ENCODE measurements at regions of chr9 and their contacts with region 1.

Region 1: DNA sequence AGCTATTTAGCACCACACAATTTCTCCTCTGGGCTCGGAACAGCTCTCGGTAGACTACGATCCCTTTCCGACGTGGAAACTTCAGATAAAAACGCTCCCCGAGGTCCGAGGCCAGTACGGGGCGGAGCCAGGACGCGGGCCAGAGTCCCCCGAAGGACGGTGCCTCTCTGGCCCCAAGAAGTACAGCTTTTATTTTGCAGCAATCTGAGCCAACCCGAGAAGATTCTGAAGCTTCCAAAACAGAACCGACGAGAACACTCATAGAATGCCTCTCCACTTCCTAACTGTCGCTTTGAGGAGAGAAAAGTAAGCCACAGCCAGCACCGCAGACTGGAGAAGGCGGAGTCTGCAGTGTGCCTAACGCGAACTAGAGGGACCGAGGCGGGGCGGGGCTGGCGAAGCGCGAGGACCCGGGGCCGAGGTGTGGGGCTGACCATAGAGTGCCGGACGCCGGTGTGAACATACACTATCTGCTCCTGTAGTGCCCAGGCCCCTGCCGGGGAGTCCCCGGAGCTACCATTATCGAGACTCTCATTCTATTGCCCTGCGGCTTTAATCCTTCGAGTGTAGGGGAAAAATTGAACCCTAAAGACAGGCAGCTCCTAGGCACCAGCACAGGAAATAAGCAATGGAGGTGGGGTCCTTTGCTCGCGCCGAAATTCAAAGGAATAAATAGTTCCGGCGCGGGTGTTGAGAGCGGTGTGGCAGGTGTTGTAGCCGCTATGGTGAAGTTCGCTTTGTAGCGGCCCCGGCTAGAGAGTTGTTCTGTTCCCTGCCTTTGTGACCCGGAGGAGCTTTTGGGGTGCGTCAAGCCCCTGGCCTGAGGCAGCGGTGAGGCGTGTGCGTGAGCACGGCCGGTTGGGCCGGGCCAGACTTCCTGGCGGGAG is at the start of gene SMC2:
- DNase-seq: peak; percentile 86
- H3K4me3 ChIP-seq: peak within 1 kb of the TSS; percentile 71 to 77 (median 76)
- H3K27ac ChIP-seq: peak within 1 kb of the TSS; percentile 98
- H3K4me1 ChIP-seq: peaks cover 14% of the 10 kb centered on the region
- H3K27me3 ChIP-seq: no peaks in the 10 kb centered on the region
- CTCF ChIP-seq: no peak
- total RNA-seq, gene SMC2: 9.8 to 25.1 TPM

Region 2: GRCh38 chr9:103804077-103804735 is 289.7 kb before region 1 on chr9:
- CTCF ChIA-PET with region 1: no interaction called
- dilution Hi-C with region 1: no loop called
- in situ Hi-C with region 1: no loop called
- intact Hi-C with region 1: loop called (anchors 2 kb)
- DNase-seq: peak; percentile 76
- H3K4me3 ChIP-seq: no peak overlapping the region
- H3K27ac ChIP-seq: no peak overlapping the region
- H3K4me1 ChIP-seq: peaks cover 15% of the 10 kb centered on the region
- H3K27me3 ChIP-seq: no peaks in the 10 kb centered on the region
- CTCF ChIP-seq: no peak

Region 3: GRCh38 chr9:103949096-103949495 is 144.8 kb before region 1 on chr9:
- CTCF ChIA-PET with region 1: no interaction called
- dilution Hi-C with region 1: no loop called
- in situ Hi-C with region 1: no loop called
- intact Hi-C with region 1: loop called (anchors 10 kb)
- DNase-seq: no peak
- H3K4me3 ChIP-seq: no peak overlapping the region
- H3K27ac ChIP-seq: no peak overlapping the region
- H3K4me1 ChIP-seq: no peaks in the 10 kb centered on the region
- H3K27me3 ChIP-seq: no peaks in the 10 kb centered on the region
- CTCF ChIP-seq: no peak

Region 4: DNA sequence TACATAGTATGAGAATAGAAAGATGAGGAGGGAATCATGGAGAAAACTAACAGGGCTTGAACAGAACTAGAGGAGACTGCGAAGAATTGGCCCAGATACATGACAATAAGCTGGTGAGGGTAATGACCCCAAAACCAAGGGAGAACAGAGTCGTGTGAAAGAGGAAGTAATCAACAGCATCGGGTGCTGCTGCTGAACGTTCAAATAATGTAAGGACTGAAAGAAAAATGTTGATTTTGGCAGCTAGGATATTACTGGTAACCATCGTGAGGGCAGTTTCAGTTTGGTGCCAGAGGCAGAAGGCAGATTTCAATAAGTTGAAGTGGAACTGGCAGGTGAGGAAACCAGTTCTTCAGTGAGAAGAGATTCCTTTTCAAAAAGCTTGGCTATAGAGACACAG is 66.6 kb before region 1 on chr9:
- CTCF ChIA-PET with region 1: no interaction called
- dilution Hi-C with region 1: no loop called
- in situ Hi-C with region 1: no loop called
- intact Hi-C with region 1: loop called (anchors 2 kb)
- DNase-seq: no peak
- H3K4me3 ChIP-seq: no peak overlapping the region
- H3K27ac ChIP-seq: no peak overlapping the region
- H3K4me1 ChIP-seq: no peaks in the 10 kb centered on the region
- H3K27me3 ChIP-seq: no peaks in the 10 kb centered on the region
- CTCF ChIP-seq: no peak

Region 5: GRCh38 chr9:104075801-104076753 is 17.8 kb before region 1 on chr9:
- CTCF ChIA-PET with region 1: interaction called, 3 read pairs
- dilution Hi-C with region 1: no loop called
- in situ Hi-C with region 1: no loop called
- intact Hi-C with region 1: loop called (anchors 1 kb)
- DNase-seq: peak; percentile 91
- H3K4me3 ChIP-seq: peak overlapping the region in 2 of 3 experiments; percentile 11 to 12
- H3K27ac ChIP-seq: peak overlapping the region; percentile 98
- H3K4me1 ChIP-seq: peaks cover 36% of the 10 kb centered on the region
- H3K27me3 ChIP-seq: no peaks in the 10 kb centered on the region
- CTCF ChIP-seq: peak in 1 of 2 donors; percentile 22

Region 6: DNA sequence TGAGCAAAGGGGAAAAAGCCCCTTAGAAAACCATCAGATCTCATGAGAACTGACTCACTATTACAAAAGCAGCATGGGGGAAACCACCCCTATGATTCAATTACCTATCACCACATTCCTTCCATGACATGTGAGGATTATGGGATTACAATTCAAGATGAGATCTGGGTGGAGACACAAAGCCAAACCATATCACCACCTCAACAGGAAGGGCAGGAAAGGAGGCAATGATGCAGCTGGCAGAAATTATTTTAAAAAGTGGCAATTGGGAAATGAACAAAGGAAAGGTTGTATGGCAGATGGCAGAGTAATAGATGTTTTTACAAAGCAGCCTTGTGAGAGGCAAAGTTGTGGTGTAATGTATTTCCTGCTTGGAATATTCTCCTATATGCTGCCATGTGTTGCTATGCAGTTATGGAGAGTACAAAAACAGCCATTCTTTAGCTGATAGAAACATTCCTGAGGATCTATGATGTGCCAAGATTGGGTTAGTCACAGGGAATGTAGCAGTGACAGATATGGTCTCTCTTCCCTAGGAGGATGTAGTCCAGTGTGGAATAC is 139.0 kb after region 1 on chr9:
- CTCF ChIA-PET with region 1: no interaction called
- dilution Hi-C with region 1: no loop called
- in situ Hi-C with region 1: no loop called
- intact Hi-C with region 1: loop called (anchors 10 kb)
- DNase-seq: peak; percentile 98
- H3K4me3 ChIP-seq: no peak overlapping the region
- H3K27ac ChIP-seq: peak overlapping the region; percentile 97
- H3K4me1 ChIP-seq: peaks cover 25% of the 10 kb centered on the region
- H3K27me3 ChIP-seq: no peaks in the 10 kb centered on the region
- CTCF ChIP-seq: no peak

Region 7: DNA sequence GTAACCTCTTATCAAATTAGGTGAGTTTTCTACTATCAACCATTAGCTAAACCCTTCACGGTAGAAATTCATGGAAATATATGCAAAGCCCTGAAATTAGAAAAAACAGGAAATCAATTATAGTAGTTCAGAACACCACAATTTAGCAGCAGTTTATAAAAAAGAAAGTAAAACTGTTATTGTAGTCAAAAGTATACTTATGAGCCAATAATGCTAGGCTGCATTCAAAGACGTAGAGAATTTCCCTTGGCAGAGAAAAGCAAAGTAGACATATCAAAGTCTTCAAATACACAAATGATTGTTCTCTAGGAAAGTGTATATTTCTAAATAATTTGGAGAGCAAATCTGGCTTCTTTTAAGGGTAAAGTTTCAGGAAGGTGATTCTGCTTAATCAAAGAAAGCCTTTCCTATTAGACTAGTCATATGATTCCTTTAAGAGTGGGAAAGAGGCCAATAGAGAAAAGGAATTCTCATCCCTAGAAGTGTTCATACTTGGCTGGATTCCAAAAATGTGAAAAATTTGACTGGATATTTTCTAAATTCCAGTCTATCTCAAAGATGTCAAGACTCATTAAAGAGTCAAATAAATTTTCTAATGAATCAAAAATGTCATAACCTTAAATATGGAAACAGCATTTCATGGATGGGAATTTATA is 185.8 kb after region 1 on chr9:
- CTCF ChIA-PET with region 1: no interaction called
- dilution Hi-C with region 1: no loop called
- in situ Hi-C with region 1: no loop called
- intact Hi-C with region 1: loop called (anchors 10 kb)
- DNase-seq: peak; percentile 12
- H3K4me3 ChIP-seq: no peak overlapping the region
- H3K27ac ChIP-seq: no peak overlapping the region
- H3K4me1 ChIP-seq: peaks cover 2% of the 10 kb centered on the region
- H3K27me3 ChIP-seq: no peaks in the 10 kb centered on the region
- CTCF ChIP-seq: no peak

Measured in mammary epithelial cell (primary cell).